ENCODE measurements at regions of chr2 and their contacts with region 1.

Region 1: DNA sequence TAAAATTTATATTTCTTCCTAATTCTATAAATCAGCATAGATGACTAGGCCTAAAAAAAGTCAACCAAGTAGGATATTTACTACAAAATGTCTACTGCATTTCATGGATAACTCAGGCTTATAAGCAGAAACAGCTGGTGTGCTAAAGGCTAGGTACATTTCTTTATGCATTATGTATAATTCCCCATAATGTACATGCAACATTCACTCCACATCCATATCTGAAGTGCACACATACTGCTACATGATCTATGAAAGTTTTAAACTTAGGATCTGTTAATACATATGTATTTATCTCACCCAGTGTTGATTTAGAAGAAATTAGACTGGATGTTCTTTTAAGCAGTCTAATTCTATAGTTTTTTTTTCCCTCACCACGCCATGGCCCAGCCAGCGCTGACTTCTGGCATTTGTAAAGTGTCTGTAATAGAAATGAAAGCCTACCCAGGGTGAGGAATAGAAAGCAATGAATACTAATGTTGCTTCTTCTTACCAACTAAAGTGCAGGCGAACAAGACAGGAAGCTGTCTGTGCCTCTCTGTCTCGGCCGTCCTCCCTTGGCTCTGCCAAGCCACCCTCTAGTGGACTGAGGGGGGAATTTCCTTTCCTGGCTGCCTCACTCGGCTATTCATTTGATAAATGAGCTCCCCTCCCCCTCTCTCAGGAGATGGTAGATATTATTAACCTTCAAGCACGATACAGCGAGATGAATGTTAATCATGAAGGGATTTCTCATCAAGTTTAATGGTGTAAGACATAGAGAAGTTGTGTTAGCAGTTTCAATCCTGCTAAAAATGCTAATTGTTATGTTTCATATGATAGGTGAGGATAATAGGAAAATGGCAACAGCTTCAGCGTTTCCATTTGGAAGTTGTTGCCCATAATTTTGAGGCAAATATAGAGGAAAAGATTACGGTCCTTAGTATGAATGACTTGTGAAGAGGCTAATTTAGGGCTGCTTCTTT is 384.5 kb downstream of the MTX2 start:
- DNase-seq: peak; percentile 38
- H3K4me3 Mint-ChIP-seq: no peak overlapping the region
- H3K27ac Mint-ChIP-seq: no peak overlapping the region
- H3K4me1 Mint-ChIP-seq: peaks cover 21% of the 10 kb centered on the region
- H3K27me3 Mint-ChIP-seq: peaks cover 51% of the 10 kb centered on the region

Region 2: DNA sequence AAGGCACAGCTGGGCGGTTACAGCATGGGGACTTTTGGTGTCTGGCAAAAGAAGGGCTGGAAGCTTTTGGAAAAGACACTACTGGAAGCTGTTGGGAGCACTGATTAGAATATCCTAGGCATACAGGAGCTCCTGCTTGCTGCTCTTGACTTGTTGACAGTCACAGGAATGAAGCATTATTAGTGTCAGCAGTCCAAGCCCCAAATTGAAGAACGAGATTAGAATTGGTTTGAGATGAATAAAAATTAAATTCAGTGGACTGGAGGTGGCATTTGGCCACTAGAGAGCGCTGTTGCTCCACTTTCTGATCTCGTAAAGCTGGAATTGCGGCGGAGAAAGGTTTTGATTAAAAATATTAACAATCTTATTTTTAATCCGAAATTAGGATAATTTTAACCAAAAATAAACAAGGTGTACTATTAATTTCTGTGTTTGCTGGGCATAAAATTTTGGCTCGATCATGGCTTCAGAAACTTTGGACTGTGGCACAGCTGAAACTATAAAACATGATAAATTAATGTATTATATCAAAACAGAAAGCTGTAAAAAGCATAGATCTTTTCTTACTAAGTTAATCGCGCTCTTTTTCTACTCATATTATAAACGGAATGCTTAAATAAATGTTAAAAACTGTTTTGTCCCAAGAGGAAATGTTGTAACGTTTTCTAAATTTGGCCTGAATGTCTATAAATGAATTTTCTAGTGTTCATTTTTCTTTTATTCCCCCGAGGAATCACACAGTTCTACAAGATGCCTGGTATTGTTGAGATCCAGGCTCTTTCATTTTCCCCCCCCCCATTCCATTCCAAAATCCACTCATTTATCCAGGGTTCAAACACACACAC is 526.6 kb before region 1 on chr2:
- CTCF ChIA-PET with region 1: interaction called, 26 read pairs
- POLR2A ChIA-PET with region 1: interaction called, 3 read pairs
- DNase-seq: peak; percentile 61
- H3K4me3 Mint-ChIP-seq: no peak overlapping the region
- H3K27ac Mint-ChIP-seq: no peak overlapping the region
- H3K4me1 Mint-ChIP-seq: peaks cover 16% of the 10 kb centered on the region
- H3K27me3 Mint-ChIP-seq: peaks cover 74% of the 10 kb centered on the region

Region 3: DNA sequence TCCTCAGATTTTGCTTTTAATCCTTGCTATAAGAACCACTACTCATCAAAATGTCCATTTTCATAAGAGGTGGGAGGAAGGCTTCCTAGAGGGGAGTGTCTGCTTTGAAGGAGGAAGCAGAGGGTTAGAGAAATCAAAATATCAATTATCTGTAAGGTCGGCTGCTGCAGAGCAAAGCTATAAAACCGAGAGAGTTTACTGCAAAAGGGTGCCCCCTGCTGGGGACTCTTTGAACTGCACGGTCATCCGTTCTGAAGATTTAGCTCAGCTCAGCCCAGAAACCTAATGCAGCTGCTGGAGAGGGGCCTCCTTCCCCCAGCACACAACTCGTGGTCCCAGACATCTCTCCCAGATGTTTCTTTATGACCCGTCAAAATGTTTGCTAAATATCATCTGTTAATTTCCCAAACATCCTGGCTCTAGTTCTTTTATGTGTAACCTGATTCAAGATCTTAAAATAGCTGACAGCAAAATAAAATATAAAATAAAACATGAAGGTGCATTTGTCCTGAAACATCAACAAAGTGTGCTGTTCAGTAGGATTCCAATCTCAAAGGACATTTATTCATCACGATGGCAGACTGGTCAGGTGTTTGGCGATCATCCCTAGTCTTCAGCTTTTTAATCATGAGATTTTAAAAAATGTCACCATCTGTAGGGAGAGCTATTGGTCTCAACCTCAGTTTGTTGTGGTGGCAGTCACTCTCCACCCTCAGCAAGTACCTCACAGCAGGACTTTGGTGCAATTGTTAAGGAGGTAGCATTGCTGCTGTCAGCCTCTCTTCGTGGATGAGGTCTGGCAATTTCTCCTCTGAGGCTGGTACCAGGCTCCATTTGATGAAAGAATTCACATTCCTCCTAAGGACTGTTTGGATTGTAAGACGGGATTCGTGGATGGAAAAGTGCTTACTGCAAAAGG is 198.6 kb before region 1 on chr2:
- CTCF ChIA-PET with region 1: interaction called, 12 read pairs
- POLR2A ChIA-PET with region 1: no interaction called
- DNase-seq: peak; percentile 79
- H3K4me3 Mint-ChIP-seq: no peak overlapping the region
- H3K27ac Mint-ChIP-seq: no peak overlapping the region
- H3K4me1 Mint-ChIP-seq: no peaks in the 10 kb centered on the region
- H3K27me3 Mint-ChIP-seq: peaks cover 23% of the 10 kb centered on the region

Region 4: DNA sequence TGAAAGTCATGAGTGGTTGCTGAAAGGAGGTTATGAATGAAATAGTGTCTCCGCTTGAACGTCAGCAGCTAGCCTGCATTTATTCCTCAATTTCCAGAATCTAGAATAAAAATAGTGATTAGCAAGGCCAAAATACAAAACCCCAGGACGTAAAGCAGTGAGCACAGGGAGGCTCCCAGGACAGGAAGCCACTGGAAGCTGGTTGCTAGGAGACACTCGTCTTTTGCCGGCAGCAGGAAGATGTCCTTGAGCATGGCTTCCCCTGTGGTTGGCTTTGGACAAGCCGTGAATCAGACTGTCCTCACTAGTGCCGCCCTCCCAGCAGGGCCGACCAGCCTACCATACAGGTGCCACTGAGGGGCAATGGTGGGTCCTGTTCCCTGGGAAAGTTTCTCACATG is 10.1 kb before region 1 on chr2:
- CTCF ChIA-PET with region 1: interaction called, 21 read pairs
- POLR2A ChIA-PET with region 1: interaction called, 3 read pairs
- DNase-seq: no peak
- H3K4me3 Mint-ChIP-seq: no peak overlapping the region
- H3K27ac Mint-ChIP-seq: no peak overlapping the region
- H3K4me1 Mint-ChIP-seq: no peaks in the 10 kb centered on the region
- H3K27me3 Mint-ChIP-seq: peaks cover 73% of the 10 kb centered on the region

Region 5: DNA sequence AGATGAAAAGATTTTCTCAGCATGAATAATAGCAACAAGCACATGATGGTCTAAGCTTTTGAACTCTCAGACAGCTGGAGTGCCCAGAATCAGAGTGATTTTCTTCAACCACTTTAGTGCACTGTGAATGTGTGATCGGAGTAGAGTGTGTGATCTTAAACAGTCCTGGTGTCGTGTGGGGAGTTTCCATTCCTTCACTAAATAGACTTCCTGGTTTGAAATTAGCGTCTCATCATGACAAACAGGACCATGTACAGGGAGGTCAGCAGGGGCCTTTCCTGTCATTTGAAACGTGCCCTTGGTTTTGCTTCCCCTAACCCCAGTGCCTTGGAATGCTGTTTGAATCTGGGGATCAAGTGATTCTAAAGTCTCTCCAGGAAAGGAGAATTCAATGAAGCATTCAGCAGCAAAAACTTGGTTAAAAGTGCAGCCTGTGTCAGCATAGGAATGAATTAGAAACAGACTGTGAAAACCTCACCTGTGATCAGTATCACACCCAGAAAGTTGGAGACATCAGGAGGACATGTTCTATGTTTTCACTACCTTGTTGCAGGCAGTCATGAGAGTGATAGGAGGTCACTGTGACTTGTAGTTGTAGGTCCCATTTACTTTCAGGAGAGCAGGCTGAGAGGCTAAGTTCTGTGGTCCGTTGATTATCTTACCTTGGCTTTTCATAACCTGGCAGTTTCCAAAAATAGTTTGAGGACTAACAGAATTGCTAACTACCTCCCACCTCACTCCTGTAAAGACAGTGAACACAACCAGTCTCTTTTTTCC is 15.8 kb after region 1 on chr2:
- CTCF ChIA-PET with region 1: interaction called, 11 read pairs
- POLR2A ChIA-PET with region 1: no interaction called
- DNase-seq: no peak
- H3K4me3 Mint-ChIP-seq: no peak overlapping the region
- H3K27ac Mint-ChIP-seq: no peak overlapping the region
- H3K4me1 Mint-ChIP-seq: no peaks in the 10 kb centered on the region
- H3K27me3 Mint-ChIP-seq: peaks cover 27% of the 10 kb centered on the region